ENCODE measurements at regions of chr3 and their contacts with region 1.

Region 1: GRCh38 chr3:116770815-116771450 is 61.4 kb downstream of the TUSC7 start:
- DNase-seq: no peak
- H3K4me3 ChIP-seq: no peak overlapping the region
- H3K27ac ChIP-seq: no peak overlapping the region
- H3K4me1 ChIP-seq: no peaks in the 10 kb centered on the region
- H3K27me3 ChIP-seq: no peaks in the 10 kb centered on the region
- CTCF ChIP-seq: peak; percentile 40 to 73 (median 66)
- POLR2A ChIP-seq: no peak

Region 2: GRCh38 chr3:118636841-118637240 is 1865.9 kb after region 1 on chr3:
- intact Hi-C with region 1: loop called (anchors 10 kb)
- DNase-seq: no peak
- H3K4me3 ChIP-seq: no peak overlapping the region
- H3K27ac ChIP-seq: no peak overlapping the region
- H3K4me1 ChIP-seq: no peaks in the 10 kb centered on the region
- H3K27me3 ChIP-seq: no peaks in the 10 kb centered on the region
- CTCF ChIP-seq: no peak
- POLR2A ChIP-seq: no peak